Activated B cell treated with CpG ODN at 0.5 μM for 24 hours (primary cell): ENCODE measurements at regions of chr2 and their contacts with region 1.

Region 1: DNA sequence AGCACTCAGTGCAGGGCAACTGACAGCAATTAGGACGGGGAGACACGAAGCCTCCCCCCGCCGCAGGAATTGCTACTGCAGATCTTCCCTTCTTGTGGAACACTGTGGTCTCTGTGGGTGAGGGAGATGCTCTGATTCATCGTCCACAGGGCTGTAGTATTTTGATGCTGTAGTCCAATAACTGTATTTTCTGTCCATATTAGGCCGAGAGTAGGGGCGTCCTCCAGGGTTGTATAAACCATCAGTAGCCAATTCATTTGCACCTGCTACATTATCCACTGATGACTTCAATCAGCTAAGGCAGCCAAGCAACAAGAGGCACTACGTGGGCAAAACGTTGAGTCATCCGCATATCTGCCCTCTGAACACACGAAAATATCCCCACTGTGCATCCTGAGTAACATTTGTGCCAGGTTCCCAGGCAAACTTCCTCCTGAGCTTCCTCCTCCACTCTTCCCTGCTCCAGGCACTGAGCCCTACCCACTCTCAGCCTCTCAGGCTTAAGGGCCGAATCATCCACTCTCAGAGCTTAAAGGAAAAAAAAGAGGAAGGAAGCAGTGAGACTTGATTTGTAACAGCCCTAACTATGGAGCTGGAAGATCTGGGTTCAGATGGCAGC is 62.1 kb downstream of the LBH start:
- DNase-seq: peak; percentile 42
- ATAC-seq: peak; percentile 81
- H3K4me3 Mint-ChIP-seq: peak overlapping the region; percentile 58
- H3K27ac Mint-ChIP-seq: peak overlapping the region; percentile 95
- H3K4me1 Mint-ChIP-seq: peaks cover 74% of the 10 kb centered on the region
- H3K27me3 Mint-ChIP-seq: no peaks in the 10 kb centered on the region
- CTCF ChIP-seq: no peak

Region 2: DNA sequence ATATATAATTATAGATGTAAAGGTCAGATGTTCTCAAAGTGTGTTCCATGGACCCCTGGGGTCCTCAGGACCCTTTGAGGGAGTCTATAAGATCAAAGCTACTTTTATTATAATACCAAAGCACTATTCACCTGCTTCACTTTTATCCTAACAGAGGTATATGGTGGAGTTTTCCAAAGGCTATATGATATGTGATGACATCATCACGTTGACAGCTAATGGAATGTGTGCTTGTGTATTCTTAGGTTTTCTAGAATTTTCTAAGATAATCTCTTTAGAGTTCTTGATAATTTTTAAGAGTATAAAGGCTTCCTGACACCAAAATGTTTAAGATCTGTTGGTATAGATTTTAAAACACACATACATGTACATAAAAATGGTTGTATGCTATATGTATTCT is 361.6 kb before region 1 on chr2:
- CTCF ChIA-PET with region 1: no interaction called
- POLR2A ChIA-PET with region 1: no interaction called
- intact Hi-C with region 1: no loop called
- DNase-seq: no peak
- ATAC-seq: no peak
- H3K4me3 Mint-ChIP-seq: no peak overlapping the region
- H3K27ac Mint-ChIP-seq: no peak overlapping the region
- H3K4me1 Mint-ChIP-seq: no peaks in the 10 kb centered on the region
- H3K27me3 Mint-ChIP-seq: peaks cover 8% of the 10 kb centered on the region
- CTCF ChIP-seq: no peak

Region 3: DNA sequence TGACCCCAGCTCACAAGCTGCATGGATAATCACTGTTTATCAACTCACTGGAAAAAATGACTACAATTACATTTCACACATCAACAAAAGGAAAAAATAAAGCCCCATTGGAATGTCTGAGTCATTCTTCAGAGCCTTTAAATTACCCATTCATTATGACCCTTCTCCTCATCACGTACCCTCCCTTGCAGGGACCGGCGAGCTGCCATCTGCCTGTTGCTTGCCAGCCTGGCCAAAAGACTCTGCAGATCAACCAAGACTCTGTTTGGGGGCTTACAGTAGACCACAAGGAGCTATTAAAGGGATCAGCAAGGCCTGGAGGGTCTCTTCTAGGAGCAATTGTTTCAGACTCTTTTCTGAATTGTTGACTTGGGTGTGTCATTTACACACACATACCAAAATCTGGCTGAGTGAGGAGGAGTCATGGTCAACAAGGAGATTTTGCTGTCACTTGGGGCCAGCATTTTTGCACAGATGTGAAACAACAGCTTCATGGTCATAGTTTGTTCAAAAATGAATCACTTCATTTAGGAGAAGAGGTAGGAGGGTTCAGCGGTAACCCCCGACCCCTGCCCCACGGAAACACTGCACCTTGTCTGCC is 20.1 kb before region 1 on chr2:
- CTCF ChIA-PET with region 1: no interaction called
- POLR2A ChIA-PET with region 1: interaction called, 17 read pairs
- intact Hi-C with region 1: loop called (anchors 1 kb)
- DNase-seq: no peak
- ATAC-seq: no peak
- H3K4me3 Mint-ChIP-seq: no peak overlapping the region
- H3K27ac Mint-ChIP-seq: peak overlapping the region; percentile 72
- H3K4me1 Mint-ChIP-seq: peaks cover 93% of the 10 kb centered on the region
- H3K27me3 Mint-ChIP-seq: no peaks in the 10 kb centered on the region
- CTCF ChIP-seq: no peak

Region 4: DNA sequence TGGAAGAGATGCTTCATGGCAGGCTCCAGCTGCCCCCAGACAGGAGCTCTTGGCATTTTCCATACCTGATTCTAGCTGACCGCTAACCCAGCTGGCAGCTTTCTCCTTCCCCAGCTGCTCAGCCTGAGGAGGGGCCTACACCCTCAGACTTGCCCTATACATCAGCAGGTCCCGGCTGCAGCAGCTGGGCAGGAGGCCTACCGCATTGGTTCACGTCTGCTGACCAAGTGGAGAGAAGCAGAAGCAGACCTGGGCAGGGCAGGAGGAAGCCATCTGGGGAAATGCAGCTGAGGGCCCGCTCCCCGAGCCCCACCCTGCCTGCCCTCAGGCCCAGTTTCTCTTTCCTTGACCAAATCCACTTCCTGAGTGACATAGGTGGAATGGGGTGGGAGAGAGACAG is 11.3 kb before region 1 on chr2:
- CTCF ChIA-PET with region 1: interaction called, 5 read pairs
- POLR2A ChIA-PET with region 1: interaction called, 36 read pairs
- intact Hi-C with region 1: loop called (anchors 1 kb)
- DNase-seq: peak; percentile 70
- ATAC-seq: peak; percentile 96
- H3K4me3 Mint-ChIP-seq: peak overlapping the region; percentile 61
- H3K27ac Mint-ChIP-seq: peak overlapping the region; percentile 82
- H3K4me1 Mint-ChIP-seq: peaks cover 98% of the 10 kb centered on the region
- H3K27me3 Mint-ChIP-seq: no peaks in the 10 kb centered on the region
- CTCF ChIP-seq: no peak

Region 5: GRCh38 chr2:30310955-30311354 is 17.5 kb after region 1 on chr2:
- CTCF ChIA-PET with region 1: no interaction called
- POLR2A ChIA-PET with region 1: interaction called, 4 read pairs
- intact Hi-C with region 1: loop called (anchors 1 kb)
- DNase-seq: no peak
- ATAC-seq: peak; percentile 64
- H3K4me3 Mint-ChIP-seq: peak overlapping the region; percentile 38
- H3K27ac Mint-ChIP-seq: peak overlapping the region; percentile 82
- H3K4me1 Mint-ChIP-seq: peaks cover 53% of the 10 kb centered on the region
- H3K27me3 Mint-ChIP-seq: no peaks in the 10 kb centered on the region
- CTCF ChIP-seq: no peak

Region 6: GRCh38 chr2:31233741-31234682 is 940.6 kb after region 1 on chr2 and contains the start of gene EHD3:
- CTCF ChIA-PET with region 1: no interaction called
- POLR2A ChIA-PET with region 1: no interaction called
- intact Hi-C with region 1: loop called (anchors 10 kb)
- DNase-seq: peak; percentile 85
- ATAC-seq: peak; percentile 98
- H3K4me3 Mint-ChIP-seq: peak within 1 kb of the TSS; percentile 85
- H3K27ac Mint-ChIP-seq: peak within 1 kb of the TSS; percentile 82
- H3K4me1 Mint-ChIP-seq: peaks cover 44% of the 10 kb centered on the region
- H3K27me3 Mint-ChIP-seq: no peaks in the 10 kb centered on the region
- CTCF ChIP-seq: no peak
- total RNA-seq, gene EHD3: 38.1 and 40.3 TPM in 2 replicates